HCT116 (cell line): ENCODE measurements at regions of chr20 and their contacts with region 1.

Region 1: GRCh38 chr20:63657937-63658748 is at the start of gene RTEL1:
- DNase-seq: peak; percentile 80
- ATAC-seq: peak; percentile 86
- H3K4me3 ChIP-seq: peak within 1 kb of the TSS; percentile 82 to 99
- H3K27ac ChIP-seq: peak within 1 kb of the TSS; percentile 73
- H3K4me1 ChIP-seq: peaks cover 16 to 41% of the 10 kb centered on the region in 2 experiments
- H3K27me3 ChIP-seq: no peaks in the 10 kb centered on the region
- CTCF ChIP-seq: no peak
- POLR2A ChIP-seq: no peak
- RAD21 ChIP-seq: no peak
- total RNA-seq, gene RTEL1: 58.0 TPM

Region 2: DNA sequence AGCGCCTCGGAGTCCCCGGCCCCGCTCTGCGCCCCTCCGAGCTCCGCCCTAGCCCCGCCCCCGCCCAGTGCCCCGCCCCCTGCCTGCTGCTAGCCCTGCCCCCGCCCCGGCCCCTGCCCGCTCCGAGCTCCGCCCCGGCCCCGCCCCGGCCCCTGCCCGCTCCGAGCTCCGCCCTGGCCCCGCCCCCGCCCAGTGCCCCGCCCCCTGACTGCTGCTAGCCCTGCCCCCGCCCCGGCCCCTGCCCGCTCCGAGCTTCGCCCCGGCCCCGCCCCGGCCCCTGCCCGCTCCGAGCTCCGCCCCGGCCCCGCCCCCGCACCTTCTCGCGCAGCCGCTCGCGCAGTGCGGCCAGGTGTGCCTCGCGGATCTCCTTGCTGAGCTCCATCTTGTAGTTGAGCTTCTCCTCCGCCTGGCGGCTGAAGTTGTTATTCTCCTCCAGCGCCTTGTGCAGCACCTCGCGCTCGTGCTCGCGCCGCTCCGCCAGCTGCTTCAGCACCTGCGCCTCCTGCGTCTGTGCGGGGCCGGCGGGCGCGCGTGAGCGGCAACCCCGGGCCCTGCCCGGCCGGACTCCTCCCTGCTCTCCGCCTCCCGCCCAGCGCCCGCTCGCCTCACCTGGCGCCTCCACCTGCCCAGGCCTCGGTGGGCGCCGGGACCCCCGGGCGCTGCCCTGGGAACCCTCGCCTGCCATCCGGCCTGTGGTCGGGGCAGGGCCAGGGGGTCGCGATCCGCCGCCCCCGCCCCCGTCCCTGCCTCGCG is 16.2 kb before region 1 on chr20:
- CTCF ChIA-PET with region 1: interaction called, 6 read pairs
- POLR2A ChIA-PET with region 1: interaction called, 10 read pairs
- RAD21 ChIA-PET with region 1: no interaction called
- intact Hi-C with region 1: no loop called
- DNase-seq: peak; percentile 79
- ATAC-seq: peak; percentile 83
- H3K4me3 ChIP-seq: peak overlapping the region; percentile 40 to 59
- H3K27ac ChIP-seq: peak overlapping the region; percentile 98
- H3K4me1 ChIP-seq: peaks cover 11 to 34% of the 10 kb centered on the region in 2 experiments
- H3K27me3 ChIP-seq: no peaks in the 10 kb centered on the region
- CTCF ChIP-seq: peak in 2 of 3 experiments; percentile 36 to 52; a peak in 4 of 6 replicates
- POLR2A ChIP-seq: peak; percentile 30
- RAD21 ChIP-seq: no peak; the same call in 1 of the 2 replicates

Region 3: GRCh38 chr20:63682384-63683139 is 24.4 kb after region 1 on chr20:
- CTCF ChIA-PET with region 1: no interaction called
- POLR2A ChIA-PET with region 1: interaction called, 14 read pairs
- RAD21 ChIA-PET with region 1: interaction called, 4 to 5 read pairs
- intact Hi-C with region 1: loop called (anchors 1 kb)
- DNase-seq: peak; percentile 97
- ATAC-seq: peak; percentile 91
- H3K4me3 ChIP-seq: peak overlapping the region; percentile 24 to 51
- H3K27ac ChIP-seq: peak overlapping the region; percentile 100
- H3K4me1 ChIP-seq: peaks cover 59 to 71% of the 10 kb centered on the region in 2 experiments
- H3K27me3 ChIP-seq: no peaks in the 10 kb centered on the region
- CTCF ChIP-seq: no peak
- POLR2A ChIP-seq: peak; percentile 49
- RAD21 ChIP-seq: no peak

Region 4: GRCh38 chr20:64035066-64035932 is 377.2 kb after region 1 on chr20:
- CTCF ChIA-PET with region 1: no interaction called
- POLR2A ChIA-PET with region 1: no interaction called
- RAD21 ChIA-PET with region 1: no interaction called
- intact Hi-C with region 1: no loop called
- DNase-seq: no peak
- ATAC-seq: no peak
- H3K4me3 ChIP-seq: no peak overlapping the region
- H3K27ac ChIP-seq: no peak overlapping the region
- H3K4me1 ChIP-seq: peaks cover 3 to 21% of the 10 kb centered on the region in 2 experiments
- H3K27me3 ChIP-seq: no peaks in the 10 kb centered on the region
- CTCF ChIP-seq: no peak
- POLR2A ChIP-seq: no peak
- RAD21 ChIP-seq: no peak